ENCODE measurements at regions of chr4 and their contacts with region 1.

Region 1: GRCh38 chr4:108172753-108173598 is 4.2 kb upstream of the LEF1 start:
- DNase-seq: peak; percentile 69 to 85 (median 78)
- ATAC-seq: peak; percentile 35 to 39
- H3K4me3 Mint-ChIP-seq: peak overlapping the region; percentile 84 to 99 (median 94)
- H3K27ac Mint-ChIP-seq: peak overlapping the region; percentile 80 to 96 (median 92)
- H3K4me1 Mint-ChIP-seq: peaks cover 33 to 64% (median 53%) of the 10 kb centered on the region in 4 donors
- H3K27me3 Mint-ChIP-seq: peaks cover 0 to 24% (median 0%) of the 10 kb centered on the region in 5 donors

Region 2: GRCh38 chr4:108036213-108036612 is 136.8 kb before region 1 on chr4:
- POLR2A ChIA-PET with region 1: interaction called, 30 read pairs
- DNase-seq: peak; percentile 44 to 93 (median 78)
- ATAC-seq: peak; percentile 95 to 99
- H3K4me3 Mint-ChIP-seq: peak overlapping the region; percentile 66 to 85 (median 76)
- H3K27ac Mint-ChIP-seq: peak overlapping the region; percentile 90 to 100 (median 98)
- H3K4me1 Mint-ChIP-seq: peaks cover 19 to 74% (median 58%) of the 10 kb centered on the region in 4 donors
- H3K27me3 Mint-ChIP-seq: no peaks in the 10 kb centered on the region

Region 3: DNA sequence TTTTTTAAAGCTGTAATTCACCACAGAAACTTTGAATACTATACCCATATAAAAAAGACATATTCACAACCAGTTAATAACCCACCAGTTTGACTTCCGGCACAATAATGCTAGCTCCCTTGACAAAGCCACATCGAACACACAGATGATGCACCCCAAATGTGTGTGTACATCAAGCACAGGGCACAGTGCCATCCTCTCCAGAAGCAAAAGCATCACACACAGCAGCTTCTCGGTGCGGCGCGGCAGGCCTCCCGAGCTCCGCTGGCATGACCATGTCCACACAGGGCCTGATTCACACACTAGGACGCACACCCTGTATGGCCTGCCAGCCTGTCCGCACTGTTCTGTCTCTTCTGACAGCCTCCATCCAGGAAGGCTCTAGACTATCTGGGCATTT is 92.2 kb before region 1 on chr4:
- POLR2A ChIA-PET with region 1: interaction called, 13 read pairs
- DNase-seq: peak; percentile 48 to 87 (median 71)
- ATAC-seq: peak; percentile 79 to 91
- H3K4me3 Mint-ChIP-seq: peak overlapping the region; percentile 66 to 84 (median 81)
- H3K27ac Mint-ChIP-seq: peak overlapping the region; percentile 94 to 99 (median 98)
- H3K4me1 Mint-ChIP-seq: peaks cover 41 to 82% (median 72%) of the 10 kb centered on the region in 4 donors
- H3K27me3 Mint-ChIP-seq: no peaks in the 10 kb centered on the region

Region 4: DNA sequence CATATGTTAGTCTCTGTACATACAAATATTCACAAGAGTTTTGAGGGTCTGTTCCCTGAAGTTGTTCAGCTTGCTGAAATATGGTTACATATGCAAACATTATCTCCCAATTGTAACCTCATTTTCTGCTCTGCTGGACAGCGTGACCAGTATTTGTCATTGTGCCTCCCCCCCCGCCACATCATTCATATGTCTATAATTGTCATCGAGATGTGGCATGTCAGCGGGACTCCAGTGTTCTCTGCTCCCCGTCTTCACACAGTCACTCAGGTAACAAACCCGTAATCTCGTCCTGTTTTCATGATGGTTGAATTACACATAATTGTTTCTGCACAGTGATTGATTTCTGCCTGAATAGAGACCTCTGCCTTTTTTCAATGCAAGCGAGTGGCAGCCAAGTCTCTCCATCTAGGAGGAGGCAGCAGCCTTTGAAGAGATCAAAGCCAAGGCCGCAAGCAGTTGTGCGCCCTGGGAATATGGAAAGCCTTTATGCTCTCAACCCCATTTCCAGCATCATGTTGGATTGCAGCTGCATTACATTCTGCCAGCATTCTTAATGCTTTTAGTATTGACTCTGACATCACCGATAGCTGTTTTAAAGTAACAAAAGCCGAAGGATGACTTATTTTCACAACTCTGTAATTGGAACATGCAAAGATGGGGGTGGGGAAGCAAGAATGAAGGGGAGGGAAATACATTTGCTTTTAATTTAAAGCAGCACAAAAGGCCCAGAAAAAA is 31.6 kb before region 1 on chr4:
- POLR2A ChIA-PET with region 1: interaction called, 10 read pairs
- DNase-seq: peak in 1 of 10 donors; percentile 46
- ATAC-seq: peak in 1 of 2 donors; percentile 3
- H3K4me3 Mint-ChIP-seq: peak overlapping the region; percentile 68 to 90 (median 81)
- H3K27ac Mint-ChIP-seq: peak overlapping the region; percentile 90 to 97 (median 94)
- H3K4me1 Mint-ChIP-seq: peaks cover 50 to 94% (median 90%) of the 10 kb centered on the region in 4 donors
- H3K27me3 Mint-ChIP-seq: no peaks in the 10 kb centered on the region

Region 5: DNA sequence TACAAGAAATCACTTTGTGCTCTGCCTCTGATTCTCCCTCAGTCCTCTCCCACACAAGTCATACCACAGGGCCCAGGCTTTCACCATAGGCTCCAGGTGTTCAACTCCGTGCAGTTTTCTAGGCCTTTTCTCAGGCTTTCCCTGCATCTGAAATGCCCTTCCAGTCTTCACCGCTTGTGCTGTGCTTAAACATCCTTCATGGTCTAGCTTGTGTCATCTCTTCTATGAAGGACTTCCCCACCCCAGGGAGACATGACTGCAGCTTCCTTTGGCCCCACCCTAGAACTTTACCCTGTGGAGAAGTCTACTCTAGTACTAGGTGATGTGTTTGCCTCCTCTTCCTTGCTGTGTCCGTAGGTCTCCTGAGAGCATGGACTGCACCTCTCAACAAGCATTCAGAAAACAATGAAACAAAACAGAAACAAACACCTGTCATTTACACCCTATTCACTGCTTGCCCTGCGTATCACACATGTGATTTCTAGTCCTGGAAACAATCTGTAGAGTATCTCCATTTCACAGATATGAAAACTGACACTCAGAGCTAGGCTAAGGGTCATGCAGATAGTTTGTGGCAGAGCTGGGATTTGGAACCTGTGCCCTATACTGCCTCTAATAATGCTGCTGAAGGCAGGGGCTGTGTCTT is 18.4 kb after region 1 on chr4:
- POLR2A ChIA-PET with region 1: no interaction called
- DNase-seq: no peak
- ATAC-seq: peak in 1 of 2 donors; percentile 39
- H3K4me3 Mint-ChIP-seq: no peak overlapping the region
- H3K27ac Mint-ChIP-seq: peak overlapping the region in 6 of 10 donors; percentile 12 to 87 (median 39)
- H3K4me1 Mint-ChIP-seq: peaks cover 15 to 36% (median 26%) of the 10 kb centered on the region in 4 donors
- H3K27me3 Mint-ChIP-seq: no peaks in the 10 kb centered on the region

Region 6: GRCh38 chr4:108355186-108355901 is 182.4 kb after region 1 on chr4:
- POLR2A ChIA-PET with region 1: interaction called, 14 read pairs
- DNase-seq: peak in 9 of 10 donors; percentile 17 to 88 (median 61)
- ATAC-seq: peak; percentile 90 to 92
- H3K4me3 Mint-ChIP-seq: peak overlapping the region; percentile 27 to 80 (median 65)
- H3K27ac Mint-ChIP-seq: peak overlapping the region; percentile 87 to 99 (median 91)
- H3K4me1 Mint-ChIP-seq: peaks cover 33 to 77% (median 67%) of the 10 kb centered on the region in 4 donors
- H3K27me3 Mint-ChIP-seq: no peaks in the 10 kb centered on the region